Left cardiac atrium (tissue), 4 donors: ENCODE measurements at regions of chr1 and their contacts with region 1.

Region 1: GRCh38 chr1:56578963-56579875 is at the start of gene PLPP3:
- DNase-seq: peak; percentile 89
- ATAC-seq: peak; percentile 91 to 96
- total RNA-seq, gene PLPP3: 85.1 to 115 TPM

Region 2: GRCh38 chr1:56357927-56358690 is 221.1 kb before region 1 on chr1:
- intact Hi-C with region 1: loop called in 1 of 2 experiments (anchors 10 kb)
- DNase-seq: no peak
- ATAC-seq: no peak

Region 3: DNA sequence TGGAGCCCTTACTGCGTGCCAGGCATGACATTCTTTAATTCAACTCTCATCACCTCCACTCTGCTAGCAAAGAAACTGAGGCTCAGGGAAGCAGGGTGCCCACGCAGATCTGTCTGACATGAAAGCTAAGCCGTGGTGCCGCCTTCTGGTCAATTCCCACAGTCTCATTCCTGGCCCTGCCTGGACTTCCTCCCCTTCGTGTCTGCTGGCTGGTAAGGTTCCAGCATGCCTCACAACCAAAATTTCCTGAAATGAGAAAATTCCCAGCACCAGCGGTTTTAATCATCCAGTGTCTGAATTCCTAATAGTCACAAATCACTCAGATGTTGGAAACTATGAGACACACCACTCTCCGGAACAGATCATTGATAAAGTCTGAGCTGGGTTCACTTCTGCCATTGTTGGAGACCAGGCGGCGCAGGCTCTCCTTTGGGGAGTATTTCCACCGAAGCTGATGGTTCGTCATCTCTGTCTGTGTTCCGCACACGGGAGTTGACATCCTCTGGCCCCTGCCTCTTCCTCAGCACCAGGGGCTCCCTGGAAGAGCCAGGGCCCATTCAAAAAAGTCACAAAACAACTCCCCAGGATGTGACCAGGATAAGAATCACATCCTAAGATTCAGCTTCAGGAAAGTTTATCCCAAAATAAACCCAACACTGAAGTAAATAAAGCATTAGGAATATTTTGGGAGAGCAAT is 167.6 kb before region 1 on chr1:
- intact Hi-C with region 1: loop called in 1 of 2 experiments (anchors 10 kb)
- DNase-seq: peak; percentile 85
- ATAC-seq: peak; percentile 74 to 75

Region 4: GRCh38 chr1:56508523-56508983 is 70.7 kb before region 1 on chr1:
- intact Hi-C with region 1: loop called (anchors 5 to 10 kb)
- DNase-seq: peak; percentile 72
- ATAC-seq: peak; percentile 58 to 78

Region 5: DNA sequence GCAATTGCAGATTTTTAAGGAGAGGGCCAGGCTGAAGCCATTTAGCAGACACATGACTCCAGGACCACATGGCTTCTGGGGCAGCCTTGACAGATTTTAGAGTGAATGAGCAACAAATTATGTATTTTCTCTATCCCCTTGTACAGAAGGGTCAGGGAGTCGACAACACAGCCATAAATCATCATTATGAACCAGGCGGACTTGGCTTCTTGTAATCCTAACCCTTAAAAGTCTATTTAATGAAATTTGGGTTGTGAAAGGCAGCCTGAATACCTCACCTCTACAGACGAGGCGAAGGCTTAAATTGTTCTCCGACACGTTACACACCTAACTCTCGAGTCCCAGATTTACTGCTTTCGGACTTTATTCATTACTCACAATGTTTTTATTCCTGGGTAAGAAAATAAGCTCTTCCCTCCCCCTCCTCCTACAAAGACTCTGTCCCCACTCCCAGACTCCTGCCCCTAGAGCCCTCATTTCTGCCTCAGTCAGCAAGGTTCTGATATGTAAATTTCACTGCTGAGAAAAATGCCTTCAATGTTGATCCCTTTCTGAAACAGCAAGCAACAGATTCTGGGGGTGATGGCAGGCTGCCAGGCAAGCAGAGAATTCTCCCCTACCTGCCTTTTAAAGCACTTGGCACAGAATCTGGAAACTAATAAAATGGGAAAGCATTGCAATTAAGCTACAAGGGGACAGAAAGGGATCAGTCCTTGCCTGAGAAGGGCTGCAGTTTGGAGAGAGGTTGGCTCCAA is 51.5 kb before region 1 on chr1:
- intact Hi-C with region 1: no loop called
- DNase-seq: no peak
- ATAC-seq: no peak